GM12878 (cell line): ENCODE measurements at regions of chr10 and their contacts with region 1.

Region 1: DNA sequence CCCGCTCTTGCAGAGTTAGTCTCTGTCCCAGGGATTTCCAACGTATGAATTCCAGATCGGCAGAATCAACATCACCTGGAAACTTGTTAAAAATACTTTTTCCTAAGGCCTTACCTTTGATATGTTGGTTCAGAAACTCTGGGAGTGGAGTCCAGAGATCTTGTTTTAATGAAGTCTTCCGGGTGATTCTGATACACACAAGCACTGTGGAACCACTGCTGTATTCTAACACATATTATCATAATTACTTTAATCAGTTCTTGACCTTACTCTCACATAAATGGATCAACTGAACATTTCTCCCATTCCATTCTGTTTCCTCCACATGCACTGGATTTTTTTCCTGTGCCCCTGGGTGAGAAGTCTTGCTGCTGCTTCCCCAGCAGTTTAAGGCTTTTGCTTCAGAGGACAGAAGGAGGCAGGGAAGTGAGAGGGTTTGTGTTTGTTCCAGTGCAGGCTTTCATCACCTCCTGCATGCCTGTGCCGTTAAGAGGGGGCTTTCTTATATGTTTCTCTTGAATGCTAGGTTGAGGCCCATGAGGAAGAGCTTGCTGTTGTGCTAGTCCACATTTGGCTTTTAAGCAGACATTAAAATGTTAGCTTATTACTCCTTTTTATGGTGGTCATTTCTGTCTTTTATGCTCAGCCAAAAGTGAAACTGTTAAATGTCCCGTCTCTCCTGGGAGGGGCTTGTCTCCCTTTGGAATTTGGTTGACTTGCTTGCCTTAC is 32.4 kb downstream of the CCSER2 start:
- DNase-seq: no peak
- ATAC-seq: no peak
- H3K4me3 ChIP-seq: no peak overlapping the region
- H3K27ac ChIP-seq: no peak overlapping the region
- H3K4me1 ChIP-seq: no peaks in the 10 kb centered on the region
- H3K27me3 ChIP-seq: no peaks in the 10 kb centered on the region
- CTCF ChIP-seq: no peak
- EP300 ChIP-seq: no peak
- POLR2A ChIP-seq: no peak
- RAD21 ChIP-seq: no peak

Region 2: GRCh38 chr10:84375011-84375410 is 14.2 kb after region 1 on chr10:
- CTCF ChIA-PET with region 1: interaction called, 19 read pairs
- POLR2A ChIA-PET with region 1: no interaction called
- RAD21 ChIA-PET with region 1: interaction called, 3 read pairs
- SMC1A ChIA-PET with region 1: interaction called, 8 read pairs
- in situ Hi-C with region 1: no loop called
- intact Hi-C with region 1: no loop called
- DNase-seq: peak; percentile 34
- ATAC-seq: peak; percentile 78
- H3K4me3 ChIP-seq: no peak overlapping the region
- H3K27ac ChIP-seq: no peak overlapping the region
- H3K4me1 ChIP-seq: no peaks in the 10 kb centered on the region
- H3K27me3 ChIP-seq: no peaks in the 10 kb centered on the region
- CTCF ChIP-seq: peak; percentile 58 to 69 (median 60)
- EP300 ChIP-seq: no peak
- POLR2A ChIP-seq: no peak
- RAD21 ChIP-seq: peak; percentile 77

Region 3: GRCh38 chr10:84755311-84755710 is 394.5 kb after region 1 on chr10:
- CTCF ChIA-PET with region 1: no interaction called
- POLR2A ChIA-PET with region 1: no interaction called
- RAD21 ChIA-PET with region 1: no interaction called
- SMC1A ChIA-PET with region 1: no interaction called
- in situ Hi-C with region 1: no loop called
- intact Hi-C with region 1: no loop called
- DNase-seq: no peak
- ATAC-seq: no peak
- H3K4me3 ChIP-seq: no peak overlapping the region
- H3K27ac ChIP-seq: no peak overlapping the region
- H3K4me1 ChIP-seq: no peaks in the 10 kb centered on the region
- H3K27me3 ChIP-seq: 0 out of 4 replicates have a peak, but pooled peaks cover 0 to 1% of the 10 kb centered on the region in 2 experiments
- CTCF ChIP-seq: no peak
- EP300 ChIP-seq: no peak
- POLR2A ChIP-seq: no peak
- RAD21 ChIP-seq: no peak